ENCODE measurements at regions of chr4 and their contacts with region 1.

Region 1: GRCh38 chr4:14254252-14254651 is 626.7 kb upstream of the BOD1L1 start:
- DNase-seq: peak in 1 of 2 donors; percentile 56
- ATAC-seq: no peak
- H3K4me3 ChIP-seq: no peak overlapping the region
- H3K27ac ChIP-seq: no peak overlapping the region
- H3K4me1 ChIP-seq: no peaks in the 10 kb centered on the region
- H3K27me3 ChIP-seq: no peaks in the 10 kb centered on the region

Region 2: DNA sequence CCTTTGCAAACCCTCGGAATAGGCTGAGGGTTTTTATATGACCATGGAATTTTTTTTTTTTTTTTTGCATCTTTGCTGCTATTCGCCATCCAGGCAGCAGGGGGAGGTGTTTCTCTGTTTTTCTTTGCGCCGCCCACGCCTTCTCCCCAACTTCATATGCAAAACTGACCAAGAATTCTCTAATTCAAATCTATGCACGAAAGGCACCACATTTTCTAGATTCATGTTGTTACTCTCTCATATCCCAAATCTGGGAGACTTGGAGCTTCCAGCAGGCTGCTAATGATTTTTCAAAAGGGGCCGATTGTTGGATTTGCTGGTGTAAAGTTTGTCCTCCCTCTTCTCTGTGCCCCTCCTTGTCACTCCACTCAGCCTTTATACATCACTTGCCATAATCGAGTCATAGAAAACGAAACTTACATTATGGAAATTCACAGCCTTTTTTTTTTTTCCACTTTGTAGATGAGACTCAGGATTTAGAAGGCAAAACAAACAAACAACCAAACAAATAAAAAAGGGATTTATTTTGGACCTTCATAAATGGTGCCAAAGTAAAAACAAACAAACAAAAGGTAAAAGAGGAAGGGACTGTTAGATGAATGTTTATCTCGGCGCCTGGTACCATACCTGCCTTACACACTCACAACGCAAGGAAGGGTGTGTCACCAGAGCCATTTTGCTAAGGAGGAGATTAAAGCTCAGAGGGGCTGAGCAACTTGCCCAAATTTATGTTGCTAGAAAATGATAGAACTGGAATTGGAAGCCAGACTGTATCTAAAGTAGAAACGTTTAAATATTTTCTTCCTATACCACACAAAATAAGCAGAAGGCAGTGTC is 597.5 kb before region 1 on chr4:
- intact Hi-C with region 1: loop called in 1 of 2 experiments (anchors 5 kb)
- DNase-seq: peak; percentile 65 to 84
- ATAC-seq: peak; percentile 59
- H3K4me3 ChIP-seq: no peak overlapping the region
- H3K27ac ChIP-seq: no peak overlapping the region
- H3K4me1 ChIP-seq: no peaks in the 10 kb centered on the region
- H3K27me3 ChIP-seq: no peaks in the 10 kb centered on the region